ENCODE measurements at regions of chr1 and their contacts with region 1.

Region 1: DNA sequence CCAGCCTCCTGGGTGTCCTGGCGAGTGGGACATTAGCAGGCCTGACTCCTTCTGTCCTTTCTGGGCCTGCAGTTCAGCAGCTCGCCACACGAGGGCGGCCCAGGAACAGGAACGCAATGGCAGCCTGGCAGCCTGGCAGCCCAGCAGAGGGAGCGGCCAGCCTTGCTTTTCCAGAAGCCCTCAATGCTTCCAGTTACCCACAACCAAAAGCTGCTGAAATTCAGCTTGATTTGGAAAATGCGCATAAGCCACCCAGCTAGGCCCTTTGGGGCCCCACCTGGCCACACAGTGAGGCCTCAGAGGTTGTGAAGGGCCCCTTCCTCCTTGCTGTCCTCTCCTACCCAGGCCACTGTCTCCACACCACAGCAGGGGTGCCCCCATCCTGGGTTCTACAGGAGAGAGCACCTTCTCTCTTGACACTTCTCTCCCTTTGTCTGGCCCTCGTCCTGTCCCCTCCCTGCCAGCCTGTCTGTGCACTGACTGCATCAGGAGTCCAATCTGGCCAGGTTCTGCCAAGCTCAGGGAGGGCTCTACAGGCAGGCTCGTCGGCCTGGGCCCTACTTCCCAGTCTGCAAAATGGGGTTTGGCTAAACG is 103.4 kb upstream of the VAMP3 start:
- DNase-seq: peak; percentile 90
- CTCF ChIP-seq: peak; percentile 100

Region 2: GRCh38 chr1:7770997-7771822 is 103.5 kb after region 1 on chr1 and contains the start of gene VAMP3:
- in situ Hi-C with region 1: loop called (anchors 25 kb)
- DNase-seq: peak; percentile 98
- CTCF ChIP-seq: no peak

Region 3: GRCh38 chr1:7902478-7903085 is 234.9 kb after region 1 on chr1:
- in situ Hi-C with region 1: loop called (anchors 10 kb)
- DNase-seq: peak; percentile 73
- CTCF ChIP-seq: peak; percentile 77

Region 4: DNA sequence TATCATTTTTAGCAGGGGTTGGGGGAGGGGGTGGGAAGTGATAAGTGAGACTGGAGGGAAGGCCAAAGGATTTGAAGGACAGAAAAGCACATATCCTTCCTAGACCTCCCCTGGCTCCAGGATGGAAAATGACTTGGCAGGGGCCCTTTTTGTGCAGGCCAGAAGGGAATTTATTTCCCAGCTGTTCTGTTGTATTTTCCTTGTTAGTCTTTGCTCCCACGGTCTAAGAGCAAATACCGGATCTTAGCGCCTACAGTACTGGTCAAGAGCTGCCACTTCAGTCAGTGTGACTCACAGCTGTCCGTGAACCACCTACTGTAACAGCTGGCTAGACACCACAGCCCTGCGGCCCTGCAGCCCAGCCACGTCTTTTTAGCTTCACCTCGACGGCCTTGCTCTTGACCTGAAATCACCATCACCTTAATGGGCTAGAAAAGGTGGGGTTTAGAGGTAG is 409.4 kb after region 1 on chr1:
- in situ Hi-C with region 1: no loop called
- DNase-seq: no peak
- CTCF ChIP-seq: no peak